Activated CD8-positive, alpha-beta T cell treated with anti-CD3 and anti-CD28 coated beads for 36 hours (primary cell): ENCODE measurements at regions of chr5 and their contacts with region 1.

Region 1: GRCh38 chr5:55691265-55692105 is 20.6 kb downstream of the SLC38A9 start:
- DNase-seq: no peak
- ATAC-seq: peak; percentile 69
- H3K4me3 Mint-ChIP-seq: no peak overlapping the region
- H3K27ac Mint-ChIP-seq: no peak overlapping the region
- H3K4me1 Mint-ChIP-seq: peaks cover 2% of the 10 kb centered on the region
- H3K27me3 Mint-ChIP-seq: no peaks in the 10 kb centered on the region
- CTCF ChIP-seq: peak; percentile 66

Region 2: GRCh38 chr5:55344392-55344992 is 347.0 kb before region 1 on chr5:
- CTCF ChIA-PET with region 1: interaction called, 17 read pairs
- POLR2A ChIA-PET with region 1: no interaction called
- intact Hi-C with region 1: loop called (anchors 10 kb)
- DNase-seq: peak; percentile 84
- ATAC-seq: peak; percentile 67
- H3K4me3 Mint-ChIP-seq: no peak overlapping the region
- H3K27ac Mint-ChIP-seq: no peak overlapping the region
- H3K4me1 Mint-ChIP-seq: peaks cover 5% of the 10 kb centered on the region
- H3K27me3 Mint-ChIP-seq: no peaks in the 10 kb centered on the region
- CTCF ChIP-seq: peak; percentile 96

Region 3: GRCh38 chr5:55407059-55407684 is 284.3 kb before region 1 on chr5:
- CTCF ChIA-PET with region 1: interaction called, 21 read pairs
- POLR2A ChIA-PET with region 1: no interaction called
- intact Hi-C with region 1: no loop called
- DNase-seq: peak; percentile 20
- ATAC-seq: no peak
- H3K4me3 Mint-ChIP-seq: no peak overlapping the region
- H3K27ac Mint-ChIP-seq: no peak overlapping the region
- H3K4me1 Mint-ChIP-seq: peaks cover 7% of the 10 kb centered on the region
- H3K27me3 Mint-ChIP-seq: no peaks in the 10 kb centered on the region
- CTCF ChIP-seq: peak; percentile 56

Region 4: GRCh38 chr5:55421074-55421529 is 270.4 kb before region 1 on chr5:
- CTCF ChIA-PET with region 1: interaction called, 4 read pairs
- POLR2A ChIA-PET with region 1: no interaction called
- intact Hi-C with region 1: loop called (anchors 10 kb)
- DNase-seq: peak; percentile 39
- ATAC-seq: peak; percentile 99
- H3K4me3 Mint-ChIP-seq: no peak overlapping the region
- H3K27ac Mint-ChIP-seq: no peak overlapping the region
- H3K4me1 Mint-ChIP-seq: peaks cover 29% of the 10 kb centered on the region
- H3K27me3 Mint-ChIP-seq: no peaks in the 10 kb centered on the region
- CTCF ChIP-seq: no peak

Region 5: GRCh38 chr5:55675119-55675518 is 16.4 kb before region 1 on chr5:
- CTCF ChIA-PET with region 1: interaction called, 11 read pairs
- POLR2A ChIA-PET with region 1: no interaction called
- intact Hi-C with region 1: no loop called
- DNase-seq: no peak
- ATAC-seq: no peak
- H3K4me3 Mint-ChIP-seq: no peak overlapping the region
- H3K27ac Mint-ChIP-seq: no peak overlapping the region
- H3K4me1 Mint-ChIP-seq: no peaks in the 10 kb centered on the region
- H3K27me3 Mint-ChIP-seq: no peaks in the 10 kb centered on the region
- CTCF ChIP-seq: no peak